Activated naive CD8-positive, alpha-beta T cell treated with anti-CD3 and anti-CD28 coated beads, Interleukin-2, amount 10 ng/mL, durations not matched to agents 7 days and 5 days (primary cell): ENCODE measurements at regions of chr19 and their contacts with region 1.

Region 1: GRCh38 chr19:8544168-8544567 is 30.2 kb upstream of the ZNF414 start:
- DNase-seq: no peak
- ATAC-seq: no peak
- H3K4me3 Mint-ChIP-seq: no peak overlapping the region
- H3K27ac Mint-ChIP-seq: no peak overlapping the region
- H3K4me1 Mint-ChIP-seq: no peaks in the 10 kb centered on the region
- H3K27me3 Mint-ChIP-seq: no peaks in the 10 kb centered on the region

Region 2: GRCh38 chr19:8459520-8460259 is 84.5 kb before region 1 on chr19:
- POLR2A ChIA-PET with region 1: no interaction called
- DNase-seq: no peak
- ATAC-seq: no peak
- H3K4me3 Mint-ChIP-seq: no peak overlapping the region
- H3K27ac Mint-ChIP-seq: no peak overlapping the region
- H3K4me1 Mint-ChIP-seq: peaks cover 18% of the 10 kb centered on the region
- H3K27me3 Mint-ChIP-seq: no peaks in the 10 kb centered on the region

Region 3: DNA sequence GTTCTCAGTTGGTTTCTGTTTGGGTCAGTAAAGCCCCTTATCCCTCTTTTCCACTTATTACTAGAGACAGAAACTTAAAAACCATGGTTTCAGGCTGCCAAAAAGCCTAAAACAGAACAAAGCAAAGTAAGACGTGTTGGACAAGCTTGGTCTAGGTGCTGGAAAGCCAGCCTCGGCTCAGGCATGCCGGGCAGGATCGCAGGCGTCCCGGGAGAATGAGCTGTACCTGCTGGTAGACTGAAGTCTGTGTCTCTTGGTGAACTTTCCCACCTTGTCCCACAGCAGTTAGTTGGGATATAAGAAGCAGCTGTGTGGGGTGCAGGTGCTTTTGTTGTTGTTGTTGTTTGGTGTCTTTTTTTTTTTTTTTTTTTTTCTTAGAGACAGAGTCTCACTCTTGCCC is 62.6 kb before region 1 on chr19:
- POLR2A ChIA-PET with region 1: interaction called, 11 read pairs
- DNase-seq: no peak
- ATAC-seq: no peak
- H3K4me3 Mint-ChIP-seq: no peak overlapping the region
- H3K27ac Mint-ChIP-seq: peak overlapping the region; percentile 69
- H3K4me1 Mint-ChIP-seq: peaks cover 47% of the 10 kb centered on the region
- H3K27me3 Mint-ChIP-seq: no peaks in the 10 kb centered on the region

Region 4: GRCh38 chr19:8530061-8530679 is 14.0 kb before region 1 on chr19:
- POLR2A ChIA-PET with region 1: no interaction called
- DNase-seq: no peak
- ATAC-seq: no peak
- H3K4me3 Mint-ChIP-seq: no peak overlapping the region
- H3K27ac Mint-ChIP-seq: no peak overlapping the region
- H3K4me1 Mint-ChIP-seq: no peaks in the 10 kb centered on the region
- H3K27me3 Mint-ChIP-seq: no peaks in the 10 kb centered on the region

Region 5: DNA sequence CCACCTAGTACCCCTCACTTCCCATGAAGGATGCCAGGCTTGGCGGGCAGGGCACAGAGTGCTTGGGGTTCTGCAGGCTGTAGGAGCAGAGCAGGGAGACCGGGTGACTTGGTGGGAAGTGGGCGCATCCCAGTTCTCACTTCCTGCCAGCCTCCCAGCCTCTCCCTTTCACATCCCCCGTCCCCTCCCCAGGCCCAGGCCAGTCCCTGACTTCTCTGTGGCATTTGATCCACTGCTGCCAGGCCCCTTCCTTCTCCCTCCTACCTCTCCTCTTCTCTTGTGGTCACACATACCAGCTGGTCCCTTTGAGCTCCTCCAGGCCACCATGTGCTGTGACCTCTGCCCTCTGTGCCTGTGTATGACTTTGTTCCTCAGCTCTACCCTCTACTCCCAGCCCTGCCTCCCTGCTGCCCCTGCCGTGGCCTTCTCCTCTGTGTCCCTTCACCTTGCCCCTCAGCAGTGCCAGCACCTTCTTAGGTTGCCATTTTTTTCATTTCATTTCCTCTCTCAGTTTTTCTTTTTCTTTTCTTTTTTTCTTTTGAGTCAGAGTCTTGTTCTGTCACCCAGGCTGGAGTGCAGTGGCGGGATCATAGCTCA is 13.6 kb after region 1 on chr19:
- POLR2A ChIA-PET with region 1: no interaction called
- DNase-seq: no peak
- ATAC-seq: peak; percentile 26
- H3K4me3 Mint-ChIP-seq: no peak overlapping the region
- H3K27ac Mint-ChIP-seq: peak overlapping the region; percentile 80
- H3K4me1 Mint-ChIP-seq: peaks cover 18% of the 10 kb centered on the region
- H3K27me3 Mint-ChIP-seq: no peaks in the 10 kb centered on the region